ENCODE measurements at regions of chr15 and their contacts with region 1.

Region 1: DNA sequence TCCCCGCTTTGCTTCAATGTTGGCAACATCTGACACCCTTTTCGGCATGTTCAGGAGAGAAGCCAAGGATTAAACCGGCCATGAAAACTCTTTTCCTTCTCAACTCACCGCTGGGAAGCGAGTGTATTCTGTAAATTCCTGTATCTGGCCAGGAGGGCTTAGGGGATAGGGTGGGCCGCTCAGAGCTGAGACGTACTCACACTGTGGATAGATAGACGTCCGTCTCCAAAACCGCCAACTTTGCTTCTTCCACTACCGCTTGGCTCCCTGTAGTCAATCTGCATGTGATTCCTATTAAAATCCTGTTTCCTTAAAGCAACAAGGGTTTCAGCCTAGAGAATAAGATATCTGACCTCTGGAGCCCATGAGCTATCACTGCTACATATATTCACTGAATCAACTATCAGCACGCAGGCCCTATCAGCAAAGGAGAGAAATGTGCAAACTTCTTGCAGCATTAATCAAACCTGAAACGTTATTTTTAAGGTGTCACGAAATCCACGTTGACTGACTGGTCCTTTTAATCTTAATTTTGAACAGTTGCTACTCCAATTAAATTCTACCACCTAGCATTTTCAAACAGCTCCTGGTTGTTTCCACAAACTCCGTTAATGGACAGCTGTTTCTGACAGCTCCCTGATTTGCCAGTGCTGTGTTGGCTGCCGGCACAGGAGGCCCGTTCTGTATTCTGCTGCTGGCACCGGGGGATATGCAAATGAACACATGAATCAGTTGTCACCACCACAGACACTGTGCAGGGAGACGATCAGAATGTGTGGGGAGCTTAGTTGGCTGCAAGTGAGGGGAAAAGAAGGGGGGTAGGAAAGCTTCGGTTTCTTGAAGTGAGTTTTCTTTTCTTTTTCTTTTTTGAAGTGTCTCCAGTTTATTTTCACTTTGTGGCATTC is 438.9 kb upstream of the ARRDC4 start:
- DNase-seq: peak; percentile 25 to 63
- ATAC-seq: peak; percentile 70 to 72
- H3K4me3 ChIP-seq: peak overlapping the region; percentile 36 to 51 (median 47)
- H3K27ac ChIP-seq: peak overlapping the region; percentile 64 to 71 (median 69)
- H3K4me1 ChIP-seq: peaks cover 10 to 12% of the 10 kb centered on the region in 2 donors
- H3K27me3 ChIP-seq: no peaks in the 10 kb centered on the region
- CTCF ChIP-seq: no peak
- POLR2A ChIP-seq: peak in 1 of 2 donors; percentile 15

Region 2: GRCh38 chr15:97461226-97461625 is 60.4 kb before region 1 on chr15:
- in situ Hi-C with region 1: no loop called
- intact Hi-C with region 1: loop called (anchors 5 kb)
- DNase-seq: no peak
- ATAC-seq: no peak
- H3K4me3 ChIP-seq: no peak overlapping the region
- H3K27ac ChIP-seq: no peak overlapping the region
- H3K4me1 ChIP-seq: peaks cover 13 to 23% of the 10 kb centered on the region in 2 donors
- H3K27me3 ChIP-seq: no peaks in the 10 kb centered on the region
- CTCF ChIP-seq: no peak
- POLR2A ChIP-seq: no peak

Region 3: GRCh38 chr15:97652700-97653167 is 131.1 kb after region 1 on chr15:
- in situ Hi-C with region 1: no loop called
- intact Hi-C with region 1: loop called (anchors 5 kb)
- DNase-seq: peak; percentile 11 to 18
- ATAC-seq: peak; percentile 30 to 43
- H3K4me3 ChIP-seq: peak overlapping the region; percentile 42 to 46 (median 44)
- H3K27ac ChIP-seq: peak overlapping the region in 1 of 4 donors; percentile 49
- H3K4me1 ChIP-seq: peaks cover 4 to 8% of the 10 kb centered on the region in 2 donors
- H3K27me3 ChIP-seq: no peaks in the 10 kb centered on the region
- CTCF ChIP-seq: no peak
- POLR2A ChIP-seq: no peak

Region 4: GRCh38 chr15:97692301-97693015 is 170.8 kb after region 1 on chr15:
- in situ Hi-C with region 1: no loop called
- intact Hi-C with region 1: loop called (anchors 1 kb)
- DNase-seq: peak; percentile 31 to 32
- ATAC-seq: peak; percentile 90
- H3K4me3 ChIP-seq: peak overlapping the region; percentile 12 to 37 (median 28)
- H3K27ac ChIP-seq: peak overlapping the region; percentile 19 to 74 (median 53)
- H3K4me1 ChIP-seq: peaks cover 13 to 18% of the 10 kb centered on the region in 2 donors
- H3K27me3 ChIP-seq: no peaks in the 10 kb centered on the region
- CTCF ChIP-seq: no peak
- POLR2A ChIP-seq: peak in 1 of 2 donors; percentile 28

Region 5: DNA sequence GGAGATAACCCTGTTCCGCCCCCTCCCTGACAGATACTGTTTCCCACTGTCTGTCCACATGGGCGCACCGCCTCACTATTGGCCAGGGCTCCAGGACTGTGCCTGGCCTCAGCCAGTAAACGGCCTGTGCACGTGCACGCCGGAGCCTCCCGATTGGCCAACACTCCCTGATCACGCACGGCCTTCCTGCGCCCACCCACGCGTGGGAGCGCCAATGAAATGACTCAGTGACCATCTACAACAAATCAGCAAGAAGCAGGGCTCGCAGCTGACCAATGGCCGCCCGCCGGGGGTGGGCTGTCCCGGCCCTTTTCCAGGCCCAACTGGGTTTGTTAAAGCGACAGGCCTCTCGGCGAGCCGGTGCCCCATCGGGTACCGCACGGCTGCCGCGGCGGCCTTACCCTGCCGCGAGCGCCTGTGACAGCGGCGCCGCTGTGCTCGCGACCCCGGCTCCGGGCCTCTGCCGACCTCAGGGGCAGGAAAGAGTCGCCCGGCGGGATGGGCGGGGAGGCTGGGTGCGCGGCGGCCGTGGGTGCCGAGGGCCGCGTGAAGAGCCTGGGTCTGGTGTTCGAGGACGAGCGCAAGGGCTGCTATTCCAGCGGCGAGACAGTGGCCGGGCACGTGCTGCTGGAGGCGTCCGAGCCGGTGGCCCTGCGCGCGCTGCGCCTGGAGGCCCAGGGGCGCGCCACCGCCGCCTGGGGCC is 438.9 kb after region 1 on chr15 and contains the start of gene ARRDC4:
- in situ Hi-C with region 1: no loop called
- intact Hi-C with region 1: loop called (anchors 10 kb)
- DNase-seq: peak; percentile 100
- ATAC-seq: peak; percentile 93 to 96
- H3K4me3 ChIP-seq: peak within 1 kb of the TSS; percentile 75 to 98 (median 94)
- H3K27ac ChIP-seq: peak within 1 kb of the TSS; percentile 80 to 97 (median 96)
- H3K4me1 ChIP-seq: peaks cover 23 to 29% of the 10 kb centered on the region in 2 donors
- H3K27me3 ChIP-seq: no peaks in the 10 kb centered on the region
- CTCF ChIP-seq: no peak
- POLR2A ChIP-seq: peak; percentile 85 to 94
- total RNA-seq, gene ARRDC4: 11.7 to 20.6 (median 17.7) TPM